MCF 10A (cell line): ENCODE measurements at regions of chr9 and their contacts with region 1.

Region 1: DNA sequence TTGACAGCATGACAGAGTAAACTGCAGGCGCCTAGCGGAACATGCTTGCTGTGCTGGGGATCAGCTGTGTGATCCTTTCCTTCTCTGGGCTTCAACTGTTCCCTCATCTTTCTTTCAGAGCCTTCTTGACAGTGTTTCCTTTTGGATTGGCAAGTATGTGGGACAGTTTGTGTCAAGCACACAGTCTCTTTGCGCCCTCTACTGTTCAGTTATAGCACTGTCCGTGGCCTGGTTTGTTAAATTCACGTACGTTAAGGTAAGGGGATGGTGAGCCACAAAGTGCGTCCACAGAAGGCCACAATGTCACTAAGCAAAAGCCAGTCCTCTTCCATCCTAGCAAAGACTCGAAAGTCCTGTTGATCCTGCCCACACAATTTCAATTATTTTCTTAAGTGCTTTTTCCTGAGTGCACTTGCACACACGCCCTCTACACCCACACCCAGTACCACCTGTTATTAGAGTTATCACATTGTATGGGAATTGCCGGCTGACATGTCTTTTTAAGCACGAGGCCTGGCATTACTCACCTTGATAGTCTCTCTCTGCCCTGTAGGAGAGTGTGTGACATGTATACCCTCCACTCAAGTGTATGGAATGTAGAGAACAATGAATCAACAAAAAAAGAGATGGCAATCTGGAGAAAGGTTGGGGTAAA is 22.5 kb upstream of the PTPN3 start:
- DNase-seq: peak; percentile 82
- H3K4me3 Mint-ChIP-seq: no peak overlapping the region
- H3K27ac Mint-ChIP-seq: peak overlapping the region; percentile 49
- H3K4me1 Mint-ChIP-seq: peaks cover 10% of the 10 kb centered on the region
- H3K27me3 Mint-ChIP-seq: no peaks in the 10 kb centered on the region
- CTCF ChIP-seq: peak; percentile 85

Region 2: DNA sequence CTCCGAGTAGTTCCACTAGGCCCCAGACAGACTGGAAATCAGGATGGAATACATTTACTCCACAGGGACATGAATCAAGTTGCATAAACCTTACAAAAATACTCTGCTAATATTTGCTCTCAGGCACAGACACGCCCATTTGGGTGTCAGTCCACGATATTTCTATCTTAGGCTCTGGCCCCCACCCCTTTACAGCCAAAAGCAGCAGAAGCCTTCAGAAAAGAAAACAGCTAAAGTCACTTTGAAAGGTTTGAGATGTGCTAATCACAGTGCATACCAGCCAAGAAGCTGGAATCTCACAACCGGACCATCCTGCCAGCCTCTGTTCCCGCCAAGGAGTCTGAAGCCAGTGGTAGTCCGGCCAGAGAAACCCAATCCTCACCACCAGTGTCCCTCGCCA is 45.1 kb before region 1 on chr9:
- CTCF ChIA-PET with region 1: interaction called, 26 read pairs
- POLR2A ChIA-PET with region 1: no interaction called
- intact Hi-C with region 1: no loop called
- DNase-seq: no peak
- H3K4me3 Mint-ChIP-seq: no peak overlapping the region
- H3K27ac Mint-ChIP-seq: no peak overlapping the region
- H3K4me1 Mint-ChIP-seq: peaks cover 36% of the 10 kb centered on the region
- H3K27me3 Mint-ChIP-seq: no peaks in the 10 kb centered on the region
- CTCF ChIP-seq: no peak

Region 3: DNA sequence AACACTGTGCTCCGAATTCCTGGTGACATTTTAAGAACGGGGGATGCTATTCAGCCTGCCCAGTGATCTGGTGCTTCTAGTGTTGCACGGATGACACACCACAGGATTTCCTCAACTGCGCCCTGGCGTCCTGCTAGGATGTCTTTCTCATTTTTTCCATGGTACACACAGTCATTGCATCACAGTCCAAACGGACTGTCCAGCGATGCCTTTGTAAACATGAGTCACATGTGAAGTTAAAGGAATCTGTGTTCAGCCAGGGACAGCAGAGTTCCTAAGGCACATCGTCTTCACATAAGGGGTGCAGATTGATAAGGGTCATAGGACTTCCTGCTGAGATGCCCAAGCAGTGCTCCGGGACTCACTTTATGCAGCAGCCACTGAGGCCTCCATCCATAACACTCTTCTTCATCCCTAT is 13.2 kb before region 1 on chr9:
- CTCF ChIA-PET with region 1: interaction called, 13 read pairs
- POLR2A ChIA-PET with region 1: no interaction called
- intact Hi-C with region 1: no loop called
- DNase-seq: peak; percentile 89
- H3K4me3 Mint-ChIP-seq: no peak overlapping the region
- H3K27ac Mint-ChIP-seq: no peak overlapping the region
- H3K4me1 Mint-ChIP-seq: peaks cover 14% of the 10 kb centered on the region
- H3K27me3 Mint-ChIP-seq: no peaks in the 10 kb centered on the region
- CTCF ChIP-seq: no peak

Region 4: DNA sequence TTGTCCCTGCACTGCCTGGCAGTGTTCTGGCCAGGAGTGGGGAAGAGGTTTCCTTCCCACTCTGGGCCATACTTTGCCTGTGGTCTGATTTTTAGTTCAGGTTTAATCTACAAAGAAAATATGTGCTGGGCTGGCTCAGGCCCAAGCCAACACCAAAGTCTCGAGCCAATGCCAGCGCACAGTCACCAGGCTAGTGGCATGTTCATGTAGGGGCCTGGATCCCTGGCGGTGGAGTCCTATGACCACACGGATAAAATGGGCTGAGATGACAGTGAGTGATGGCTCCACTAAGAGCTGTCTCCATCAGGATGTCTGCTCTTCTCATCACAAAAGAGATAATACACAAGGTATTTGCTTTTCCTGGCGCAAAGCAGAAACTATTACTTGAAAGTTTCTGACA is 70.3 kb after region 1 on chr9:
- CTCF ChIA-PET with region 1: no interaction called
- POLR2A ChIA-PET with region 1: no interaction called
- intact Hi-C with region 1: no loop called
- DNase-seq: no peak
- H3K4me3 Mint-ChIP-seq: no peak overlapping the region
- H3K27ac Mint-ChIP-seq: no peak overlapping the region
- H3K4me1 Mint-ChIP-seq: no peaks in the 10 kb centered on the region
- H3K27me3 Mint-ChIP-seq: no peaks in the 10 kb centered on the region
- CTCF ChIP-seq: no peak